ENCODE measurements at regions of chr1 and their contacts with region 1.

Region 1: DNA sequence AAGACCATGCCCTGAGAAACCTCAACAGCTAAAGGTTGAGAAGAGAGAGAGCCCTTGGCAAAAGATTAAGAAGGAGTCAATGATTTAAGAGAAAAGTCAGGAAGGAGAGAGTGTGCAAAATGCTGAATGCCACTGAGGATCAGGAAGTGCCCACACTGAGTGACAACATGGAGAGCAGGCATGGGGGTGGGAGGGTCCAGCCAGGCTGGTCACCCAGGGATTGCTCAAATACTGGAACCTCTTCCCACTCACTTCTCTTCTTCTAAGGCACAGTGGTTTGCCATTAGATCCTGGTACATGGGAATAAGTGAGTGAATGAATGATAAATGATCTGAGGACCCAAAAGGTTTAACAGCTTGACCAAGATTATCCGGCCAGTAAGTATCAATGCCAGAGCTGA is 11.1 kb downstream of the PRR9 start:
- DNase-seq: no peak
- H3K4me3 ChIP-seq: no peak overlapping the region
- H3K27ac ChIP-seq: no peak overlapping the region
- H3K27me3 ChIP-seq: no peaks in the 10 kb centered on the region
- CTCF ChIP-seq: no peak

Region 2: GRCh38 chr1:153238536-153238935 is 10.0 kb after region 1 on chr1:
- CTCF ChIA-PET with region 1: interaction called, 10 read pairs
- POLR2A ChIA-PET with region 1: no interaction called
- DNase-seq: no peak
- H3K4me3 ChIP-seq: no peak overlapping the region
- H3K27ac ChIP-seq: no peak overlapping the region
- H3K27me3 ChIP-seq: no peaks in the 10 kb centered on the region
- CTCF ChIP-seq: no peak

Region 3: DNA sequence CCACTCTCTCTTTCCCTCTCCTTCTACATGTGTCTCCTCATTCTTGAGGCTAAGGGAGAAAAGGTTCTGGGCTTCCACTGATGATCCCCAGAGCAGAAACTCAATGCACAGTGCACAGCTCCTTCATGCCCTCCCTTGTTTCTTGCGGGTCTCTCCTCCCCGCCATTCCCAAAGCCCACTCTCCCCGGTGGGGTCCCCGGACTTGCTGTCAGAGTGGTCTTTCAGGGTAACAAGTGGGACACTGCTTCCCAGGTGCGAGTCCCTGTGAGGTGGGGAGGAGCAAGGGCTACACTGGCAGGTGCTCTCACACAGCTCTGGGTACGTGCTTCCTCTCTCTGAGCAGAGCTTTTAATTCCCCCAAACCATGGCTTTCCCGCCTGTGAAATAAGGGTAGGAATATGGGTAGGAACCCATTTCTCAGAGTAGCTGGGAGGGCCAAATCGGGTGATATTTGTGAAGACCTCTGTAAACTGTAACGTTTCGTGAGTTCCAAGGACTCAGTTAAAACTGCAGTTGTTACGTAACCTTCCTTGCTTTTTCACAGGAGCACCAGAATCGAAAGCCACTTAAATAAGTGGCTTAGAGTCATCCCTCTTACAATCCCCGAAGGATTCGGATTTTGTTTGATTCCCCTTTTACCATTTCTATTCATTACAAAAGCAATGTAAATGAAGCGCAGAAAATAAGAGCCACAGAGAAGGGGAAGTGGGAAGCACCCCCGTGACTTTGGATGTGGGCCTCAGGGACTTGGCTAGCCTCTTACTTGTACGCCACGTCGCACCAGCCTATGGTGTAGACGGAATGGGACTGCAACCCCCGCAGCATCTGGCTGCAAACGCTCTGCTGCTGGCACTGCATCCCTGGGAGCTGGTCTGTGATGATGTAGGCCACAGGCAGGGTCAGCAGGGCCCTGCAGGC is 78.1 kb after region 1 on chr1:
- CTCF ChIA-PET with region 1: no interaction called
- POLR2A ChIA-PET with region 1: no interaction called
- DNase-seq: no peak
- H3K4me3 ChIP-seq: no peak overlapping the region
- H3K27ac ChIP-seq: no peak overlapping the region
- H3K27me3 ChIP-seq: no peaks in the 10 kb centered on the region
- CTCF ChIP-seq: no peak

Region 4: DNA sequence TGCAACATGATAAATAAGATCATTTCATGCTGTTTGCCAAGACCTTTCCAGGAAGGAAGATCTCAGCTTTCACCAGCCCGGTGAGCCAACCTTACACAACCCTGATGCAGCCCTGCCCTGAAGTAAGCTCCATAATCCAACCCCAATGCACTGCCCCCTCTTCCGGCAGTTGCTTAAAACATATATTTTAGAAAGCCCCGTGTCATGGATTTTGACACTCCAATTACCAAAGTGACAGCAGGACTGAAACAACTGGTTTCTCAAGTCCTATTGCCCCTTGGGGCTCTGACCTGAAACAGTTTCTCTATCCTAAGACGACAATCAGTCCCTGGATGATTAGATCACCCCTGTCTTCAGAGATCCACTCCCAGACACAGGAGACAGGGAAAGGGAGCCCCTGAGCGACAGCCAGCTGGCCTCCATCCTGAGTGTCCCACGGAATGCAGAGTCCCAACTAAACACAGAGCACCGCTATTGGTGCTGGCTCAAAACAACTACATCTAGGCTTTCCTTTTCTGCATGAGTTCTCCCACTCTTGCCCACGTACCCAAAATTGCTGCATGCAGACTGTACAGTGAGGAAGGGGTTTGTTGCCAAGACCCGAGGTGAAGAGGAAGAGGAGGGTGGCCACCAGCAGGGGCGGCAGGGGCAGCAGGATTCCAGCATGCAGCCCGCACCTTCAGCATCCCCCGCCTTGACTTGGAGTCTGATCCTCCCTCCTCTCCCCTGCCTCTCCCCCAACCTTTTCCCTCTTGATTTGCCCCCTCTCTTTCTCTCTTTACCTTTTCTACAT is 137.0 kb after region 1 on chr1:
- CTCF ChIA-PET with region 1: no interaction called
- POLR2A ChIA-PET with region 1: no interaction called
- DNase-seq: no peak
- H3K4me3 ChIP-seq: no peak overlapping the region
- H3K27ac ChIP-seq: no peak overlapping the region
- H3K27me3 ChIP-seq: peaks cover 8% of the 10 kb centered on the region
- CTCF ChIP-seq: no peak